OCI-LY7 (cell line): ENCODE measurements at regions of chr2 and their contacts with region 1.

Region 1: GRCh38 chr2:200864176-200864976 is at the start of gene CLK1:
- DNase-seq: peak; percentile 94
- H3K4me3 ChIP-seq: peak within 1 kb of the TSS; percentile 82
- H3K27ac ChIP-seq: peak within 1 kb of the TSS; percentile 89
- H3K4me1 ChIP-seq: peaks cover 30% of the 10 kb centered on the region
- CTCF ChIP-seq: no peak
- total RNA-seq, gene CLK1: 74.9 and 80.1 TPM in 2 replicates

Region 2: GRCh38 chr2:200725596-200725995 is 138.8 kb before region 1 on chr2:
- CTCF ChIA-PET with region 1: no interaction called
- POLR2A ChIA-PET with region 1: no interaction called
- intact Hi-C with region 1: no loop called
- DNase-seq: no peak
- H3K4me3 ChIP-seq: no peak overlapping the region
- H3K27ac ChIP-seq: no peak overlapping the region
- H3K4me1 ChIP-seq: no peaks in the 10 kb centered on the region
- CTCF ChIP-seq: no peak

Region 3: GRCh38 chr2:200877443-200877842 is 13.1 kb after region 1 on chr2:
- CTCF ChIA-PET with region 1: no interaction called
- POLR2A ChIA-PET with region 1: interaction called, 11 read pairs
- intact Hi-C with region 1: no loop called
- DNase-seq: no peak
- H3K4me3 ChIP-seq: no peak overlapping the region
- H3K27ac ChIP-seq: no peak overlapping the region
- H3K4me1 ChIP-seq: no peaks in the 10 kb centered on the region
- CTCF ChIP-seq: no peak

Region 4: GRCh38 chr2:200888704-200889625 is 24.6 kb after region 1 on chr2 and contains the starts of genes NIF3L1 and PPIL3:
- CTCF ChIA-PET with region 1: no interaction called
- POLR2A ChIA-PET with region 1: interaction called, 22 read pairs
- intact Hi-C with region 1: loop called (anchors 1 kb)
- DNase-seq: peak; percentile 99
- H3K4me3 ChIP-seq: peak within 1 kb of the TSS; percentile 90
- H3K27ac ChIP-seq: peak within 1 kb of the TSS; percentile 98
- H3K4me1 ChIP-seq: peaks cover 52% of the 10 kb centered on the region
- CTCF ChIP-seq: peak; percentile 39; the same call in 1 of the 2 replicates
- total RNA-seq, gene NIF3L1: 37.5 and 68.4 TPM in 2 replicates
- total RNA-seq, gene PPIL3: 49.4 and 54.4 TPM in 2 replicates